Activated CD4-positive, alpha-beta memory T cell treated with anti-CD3 and anti-CD28 coated beads, Interleukin-2, amount 10 ng/mL, durations not matched to agents 7 days and 5 days (primary cell): ENCODE measurements at regions of chr6 and their contacts with region 1.

Region 1: DNA sequence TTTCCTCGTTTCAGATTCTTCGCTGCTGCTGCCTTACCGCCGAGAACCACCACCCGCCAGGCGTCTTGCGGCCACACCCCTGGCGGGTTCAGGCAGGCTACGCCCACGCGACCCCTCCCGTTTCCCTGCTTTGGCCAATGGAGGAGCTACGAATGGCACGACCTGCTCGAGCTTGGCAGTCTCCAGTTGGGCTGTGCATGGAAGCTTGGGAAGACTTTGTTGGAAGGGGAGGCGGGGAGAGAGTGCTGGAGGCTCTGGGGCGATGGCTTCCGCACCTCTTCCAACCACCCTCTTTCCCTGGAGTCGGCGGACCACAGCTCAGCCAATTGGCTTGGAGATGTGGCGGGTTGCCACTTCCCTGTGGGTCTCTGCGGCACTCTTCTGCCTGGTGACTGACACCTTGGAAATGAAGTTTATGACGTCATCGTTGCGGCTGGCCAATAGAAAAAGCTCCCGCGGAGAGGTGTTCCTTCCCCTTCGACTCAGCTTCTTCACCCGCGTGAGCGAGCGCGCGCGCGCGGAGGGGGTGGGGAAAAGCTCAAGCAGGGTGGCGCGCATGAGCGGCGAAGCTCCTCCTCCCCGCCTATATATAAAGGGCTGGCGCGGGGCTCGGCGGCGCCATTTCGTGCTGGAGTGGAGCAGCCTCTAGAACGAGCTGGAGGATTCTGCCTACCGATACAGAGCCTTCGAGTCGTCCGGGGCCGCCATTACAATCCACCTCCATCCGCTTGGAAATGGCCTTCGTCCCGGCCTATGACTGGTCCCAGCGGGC is 3.4 kb downstream of the BRD2 start:
- DNase-seq: peak; percentile 100
- H3K4me3 Mint-ChIP-seq: peak overlapping the region; percentile 97
- H3K27ac Mint-ChIP-seq: peak overlapping the region; percentile 98
- H3K4me1 Mint-ChIP-seq: peaks cover 29% of the 10 kb centered on the region
- H3K27me3 Mint-ChIP-seq: no peaks in the 10 kb centered on the region

Region 2: DNA sequence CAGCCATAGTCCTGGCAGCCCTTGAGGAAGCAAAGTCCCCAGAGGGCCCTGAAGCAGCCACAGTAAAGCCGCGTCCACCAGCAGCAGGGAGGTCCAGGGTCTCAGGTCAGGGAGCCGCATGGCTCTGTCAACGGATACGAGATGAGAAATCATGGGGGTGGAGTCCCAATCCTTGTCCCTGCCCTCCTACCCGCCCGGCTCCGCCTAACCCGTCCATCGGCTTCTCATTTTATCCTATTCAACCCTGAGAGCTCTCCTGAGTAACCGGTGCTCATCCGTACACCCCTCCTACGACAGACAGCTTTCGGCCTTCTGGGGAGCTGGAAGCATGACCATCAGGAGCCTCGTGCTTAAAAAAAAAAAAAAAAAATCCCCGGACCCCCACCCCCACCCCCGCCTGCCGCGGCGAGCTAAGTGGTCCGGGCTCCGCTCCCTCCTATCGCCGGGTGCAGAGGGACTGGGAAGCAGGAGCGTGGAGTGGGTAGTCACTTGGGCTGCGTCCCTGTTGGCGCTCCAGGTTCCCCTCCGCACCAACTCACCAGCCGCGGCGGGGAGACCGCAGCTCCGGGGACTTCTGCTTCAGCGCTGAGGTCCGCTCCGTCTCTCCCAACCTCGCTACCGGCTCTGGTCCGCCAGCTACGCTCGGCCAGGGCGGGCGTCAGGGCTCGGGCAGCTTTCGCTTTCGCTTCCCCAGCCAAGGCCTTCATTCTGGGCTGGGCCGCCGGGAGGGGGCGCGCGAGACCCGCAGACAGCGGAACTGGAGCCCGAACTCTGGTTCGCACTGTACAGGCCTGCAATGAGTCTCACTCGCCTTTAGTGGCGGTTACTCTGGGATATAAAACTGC is 133.4 kb before region 1 on chr6 and contains the start of gene TAP2:
- CTCF ChIA-PET with region 1: interaction called, 44 read pairs
- POLR2A ChIA-PET with region 1: interaction called, 656 read pairs
- DNase-seq: peak; percentile 98
- H3K4me3 Mint-ChIP-seq: peak within 1 kb of the TSS; percentile 77
- H3K27ac Mint-ChIP-seq: peak within 1 kb of the TSS; percentile 99
- H3K4me1 Mint-ChIP-seq: peaks cover 80% of the 10 kb centered on the region
- H3K27me3 Mint-ChIP-seq: no peaks in the 10 kb centered on the region
- total RNA-seq, gene TAP2: 203 to 211 TPM

Region 3: GRCh38 chr6:32868257-32868788 is 103.4 kb before region 1 on chr6:
- CTCF ChIA-PET with region 1: interaction called, 20 read pairs
- POLR2A ChIA-PET with region 1: interaction called, 24 read pairs
- DNase-seq: peak; percentile 88
- H3K4me3 Mint-ChIP-seq: no peak overlapping the region
- H3K27ac Mint-ChIP-seq: no peak overlapping the region
- H3K4me1 Mint-ChIP-seq: peaks cover 35% of the 10 kb centered on the region
- H3K27me3 Mint-ChIP-seq: peaks cover 7% of the 10 kb centered on the region

Region 4: GRCh38 chr6:32933636-32934085 is 38.1 kb before region 1 on chr6:
- CTCF ChIA-PET with region 1: interaction called, 62 read pairs
- POLR2A ChIA-PET with region 1: interaction called, 303 read pairs
- DNase-seq: peak; percentile 79
- H3K4me3 Mint-ChIP-seq: no peak overlapping the region
- H3K27ac Mint-ChIP-seq: no peak overlapping the region
- H3K4me1 Mint-ChIP-seq: peaks cover 16% of the 10 kb centered on the region
- H3K27me3 Mint-ChIP-seq: peaks cover 2% of the 10 kb centered on the region

Region 5: GRCh38 chr6:32984605-32985389 is 13.0 kb after region 1 on chr6:
- CTCF ChIA-PET with region 1: interaction called, 81 read pairs
- POLR2A ChIA-PET with region 1: interaction called, 315 read pairs
- DNase-seq: peak; percentile 91
- H3K4me3 Mint-ChIP-seq: no peak overlapping the region
- H3K27ac Mint-ChIP-seq: peak overlapping the region; percentile 37
- H3K4me1 Mint-ChIP-seq: peaks cover 42% of the 10 kb centered on the region
- H3K27me3 Mint-ChIP-seq: peaks cover under 1% of the 10 kb centered on the region

Region 6: GRCh38 chr6:33040157-33040556 is 68.4 kb after region 1 on chr6:
- CTCF ChIA-PET with region 1: no interaction called
- POLR2A ChIA-PET with region 1: no interaction called
- DNase-seq: no peak
- H3K4me3 Mint-ChIP-seq: no peak overlapping the region
- H3K27ac Mint-ChIP-seq: no peak overlapping the region
- H3K4me1 Mint-ChIP-seq: no peaks in the 10 kb centered on the region
- H3K27me3 Mint-ChIP-seq: peaks cover 70% of the 10 kb centered on the region

Region 7: DNA sequence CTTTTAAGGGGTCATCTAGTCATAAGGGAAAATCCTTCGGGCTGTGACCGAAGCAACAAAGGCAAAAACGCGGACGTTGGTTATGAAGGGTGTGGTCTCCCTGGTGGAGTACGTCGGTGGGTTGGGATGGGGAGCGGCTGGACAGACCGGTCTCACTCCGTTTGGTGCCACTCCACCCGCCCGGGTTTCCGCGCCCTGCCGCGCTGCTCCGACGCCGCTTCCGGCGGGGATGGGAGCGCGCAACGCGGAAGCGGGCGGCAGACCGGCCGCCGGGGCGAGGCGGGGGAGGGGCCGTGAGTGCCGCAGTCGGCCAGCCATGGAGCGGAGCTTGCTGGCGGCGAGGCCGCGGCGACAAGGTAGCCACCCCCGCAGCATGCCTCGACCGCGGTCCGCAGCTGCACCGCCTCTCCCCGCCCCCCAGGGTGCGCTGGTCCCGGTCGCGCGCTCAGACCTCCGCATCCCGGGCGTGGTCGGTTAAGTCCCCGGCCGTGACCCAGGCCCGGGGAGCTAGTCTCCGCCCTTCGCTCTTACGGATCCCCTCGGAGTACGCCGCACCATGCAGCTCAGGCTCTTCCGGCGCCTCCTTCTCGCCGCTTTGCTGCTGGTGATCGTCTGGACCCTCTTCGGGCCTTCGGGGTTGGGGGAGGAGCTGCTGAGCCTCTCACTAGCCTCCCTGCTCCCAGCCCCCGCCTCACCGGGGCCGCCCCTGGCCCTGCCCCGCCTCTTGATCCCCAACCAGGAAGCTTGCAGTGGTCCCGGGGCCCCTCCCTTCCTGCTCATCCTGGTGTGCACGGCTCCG is 305.3 kb after region 1 on chr6 and contains the start of gene B3GALT4:
- CTCF ChIA-PET with region 1: interaction called, 6 read pairs
- POLR2A ChIA-PET with region 1: interaction called, 17 read pairs
- DNase-seq: peak; percentile 79
- H3K4me3 Mint-ChIP-seq: peak within 1 kb of the TSS; percentile 92
- H3K27ac Mint-ChIP-seq: peak within 1 kb of the TSS; percentile 98
- H3K4me1 Mint-ChIP-seq: peaks cover 70% of the 10 kb centered on the region
- H3K27me3 Mint-ChIP-seq: no peaks in the 10 kb centered on the region
- total RNA-seq, gene B3GALT4: 25.2 to 26.5 TPM

Region 8: GRCh38 chr6:33700391-33701050 is 728.8 kb after region 1 on chr6:
- CTCF ChIA-PET with region 1: no interaction called
- POLR2A ChIA-PET with region 1: no interaction called
- DNase-seq: peak; percentile 84
- H3K4me3 Mint-ChIP-seq: no peak overlapping the region
- H3K27ac Mint-ChIP-seq: peak overlapping the region; percentile 58
- H3K4me1 Mint-ChIP-seq: peaks cover 55% of the 10 kb centered on the region
- H3K27me3 Mint-ChIP-seq: no peaks in the 10 kb centered on the region